Panc1 (cell line): ENCODE measurements at regions of chr2 and their contacts with region 1.

Region 1: DNA sequence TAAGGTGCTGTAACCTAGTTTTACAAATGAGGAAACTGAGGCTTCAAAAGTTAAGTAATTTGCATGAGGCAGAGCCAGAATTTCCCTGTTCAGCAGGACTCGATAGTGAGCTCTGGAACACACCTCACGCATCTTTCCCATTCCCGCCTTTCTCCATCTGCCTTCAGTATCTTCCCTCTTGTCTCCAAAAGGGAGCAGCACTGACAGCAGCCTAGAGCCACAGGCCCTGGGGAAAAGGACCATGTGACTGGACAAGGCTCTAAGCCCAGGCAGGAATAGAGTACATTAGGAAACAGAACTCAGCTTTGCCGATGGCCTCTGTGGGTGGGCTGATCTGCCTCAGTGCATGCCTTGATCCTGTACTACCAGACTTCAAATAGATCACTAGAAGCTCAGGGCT is 21.5 kb downstream of the GPR155 start:
- DNase-seq: no peak
- ATAC-seq: peak; percentile 65; the same call in 1 of the 2 replicates
- H3K4me3 ChIP-seq: no peak overlapping the region
- H3K27ac ChIP-seq: no peak overlapping the region
- H3K4me1 ChIP-seq: no peaks in the 10 kb centered on the region
- H3K27me3 ChIP-seq: no peaks in the 10 kb centered on the region; the same call in 1 of the 2 replicates
- CTCF ChIP-seq: peak; percentile 14; the same call in 1 of the 2 replicates

Region 2: GRCh38 chr2:174522553-174522952 is 57.2 kb after region 1 on chr2:
- CTCF ChIA-PET with region 1: interaction called, 4 read pairs
- POLR2A ChIA-PET with region 1: no interaction called
- in situ Hi-C with region 1: no loop called
- intact Hi-C with region 1: loop called (anchors 2 kb)
- DNase-seq: no peak
- ATAC-seq: no peak
- H3K4me3 ChIP-seq: no peak overlapping the region
- H3K27ac ChIP-seq: no peak overlapping the region
- H3K4me1 ChIP-seq: no peaks in the 10 kb centered on the region
- H3K27me3 ChIP-seq: peaks cover 16% of the 10 kb centered on the region
- CTCF ChIP-seq: peak; percentile 52; the same call in 1 of the 2 replicates

Region 3: DNA sequence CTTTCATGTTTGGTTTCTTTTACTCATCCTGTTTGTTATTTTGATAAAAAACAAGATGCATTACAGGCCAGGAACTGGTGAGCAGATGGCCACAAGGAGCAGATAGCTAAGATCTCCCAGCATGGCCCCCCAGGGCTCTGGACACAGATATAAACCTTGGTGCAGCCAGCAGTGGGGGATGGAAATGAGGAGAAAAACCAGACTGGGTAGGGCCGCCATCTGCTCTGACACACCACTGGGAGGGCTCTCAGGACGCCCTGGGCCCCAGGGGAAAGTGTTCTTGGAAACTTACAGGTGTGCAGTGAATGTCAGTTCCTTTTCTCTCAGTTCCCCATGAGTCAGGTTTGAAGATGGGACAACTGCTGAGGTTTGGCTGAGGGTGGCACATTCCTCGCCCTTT is 71.0 kb after region 1 on chr2:
- CTCF ChIA-PET with region 1: no interaction called
- POLR2A ChIA-PET with region 1: interaction called, 12 read pairs
- in situ Hi-C with region 1: no loop called
- intact Hi-C with region 1: no loop called
- DNase-seq: no peak
- ATAC-seq: no peak
- H3K4me3 ChIP-seq: no peak overlapping the region
- H3K27ac ChIP-seq: no peak overlapping the region
- H3K4me1 ChIP-seq: no peaks in the 10 kb centered on the region
- H3K27me3 ChIP-seq: no peaks in the 10 kb centered on the region; the same call in 1 of the 2 replicates
- CTCF ChIP-seq: no peak

Region 4: GRCh38 chr2:174546581-174547506 is 81.5 kb after region 1 on chr2:
- CTCF ChIA-PET with region 1: interaction called, 8 read pairs
- POLR2A ChIA-PET with region 1: no interaction called
- in situ Hi-C with region 1: no loop called
- intact Hi-C with region 1: loop called (anchors 2 kb)
- DNase-seq: no peak
- ATAC-seq: peak; percentile 84
- H3K4me3 ChIP-seq: no peak overlapping the region
- H3K27ac ChIP-seq: no peak overlapping the region
- H3K4me1 ChIP-seq: no peaks in the 10 kb centered on the region
- H3K27me3 ChIP-seq: no peaks in the 10 kb centered on the region
- CTCF ChIP-seq: peak; percentile 68

Region 5: GRCh38 chr2:174682578-174683391 is 217.5 kb after region 1 on chr2:
- CTCF ChIA-PET with region 1: interaction called, 3 read pairs
- POLR2A ChIA-PET with region 1: no interaction called
- in situ Hi-C with region 1: no loop called
- intact Hi-C with region 1: loop called (anchors 5 kb)
- DNase-seq: no peak
- ATAC-seq: peak; percentile 83
- H3K4me3 ChIP-seq: peak overlapping the region; percentile 54 to 58
- H3K27ac ChIP-seq: no peak overlapping the region
- H3K4me1 ChIP-seq: peaks cover 6% of the 10 kb centered on the region
- H3K27me3 ChIP-seq: peaks cover 22% of the 10 kb centered on the region
- CTCF ChIP-seq: no peak